Activated CD4-positive, alpha-beta memory T cell treated with anti-CD3 and anti-CD28 coated beads, Interleukin-2, amount 10 ng/mL, durations not matched to agents 7 days and 5 days (primary cell): ENCODE measurements at regions of chr20 and their contacts with region 1.

Region 1: GRCh38 chr20:62182613-62183425 is at the start of gene MTG2:
- DNase-seq: peak; percentile 95
- H3K4me3 Mint-ChIP-seq: peak within 1 kb of the TSS; percentile 92
- H3K27ac Mint-ChIP-seq: peak within 1 kb of the TSS; percentile 88
- H3K4me1 Mint-ChIP-seq: peaks cover 39% of the 10 kb centered on the region
- H3K27me3 Mint-ChIP-seq: no peaks in the 10 kb centered on the region
- total RNA-seq, gene MTG2: 25.6 to 27.2 TPM

Region 2: DNA sequence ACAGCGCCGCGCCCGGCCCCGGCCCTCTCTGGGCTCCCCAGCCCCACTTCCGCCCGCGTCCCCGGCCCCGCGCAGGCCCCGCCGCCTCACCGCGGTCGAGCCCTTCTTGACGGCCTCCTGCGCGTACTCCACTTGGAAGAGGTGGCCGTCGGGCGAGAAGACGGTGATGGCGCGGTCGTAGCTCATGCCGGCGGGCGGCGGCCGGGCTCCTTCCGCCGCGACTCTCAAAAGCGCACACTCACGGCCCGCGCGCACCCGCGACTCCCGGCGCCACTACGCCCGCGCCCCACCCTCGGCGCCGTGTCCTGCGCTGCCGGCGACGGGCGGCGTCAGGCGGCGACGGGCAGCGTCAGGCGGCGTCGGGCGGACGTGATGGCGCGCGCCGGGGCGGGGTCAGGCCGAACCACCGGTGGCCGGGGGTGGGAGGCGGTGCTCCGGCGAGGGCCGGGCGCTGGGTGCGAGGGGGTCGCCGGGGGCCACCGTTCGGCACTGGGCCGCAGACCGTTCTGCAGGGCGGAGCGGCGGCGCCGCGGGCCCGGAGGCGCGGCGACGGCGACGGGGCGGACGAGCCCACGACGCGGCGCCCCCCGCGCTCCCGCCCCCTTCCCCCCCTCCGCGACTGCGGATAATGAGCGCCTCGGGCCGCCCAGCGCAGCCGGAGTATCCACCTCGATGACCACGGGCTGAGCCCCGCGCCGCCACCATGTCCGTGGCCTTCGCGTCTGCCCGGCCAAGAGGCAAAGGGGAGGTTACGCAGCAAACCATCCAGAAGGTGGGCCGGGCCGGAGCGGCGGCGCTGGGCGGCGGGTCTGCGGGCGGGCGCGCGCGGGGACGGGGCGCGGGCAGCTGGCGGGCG is 39.5 kb before region 1 on chr20 and contains the starts of genes PSMA7 and SS18L1:
- CTCF ChIA-PET with region 1: no interaction called
- POLR2A ChIA-PET with region 1: interaction called, 21 read pairs
- DNase-seq: peak; percentile 87
- H3K4me3 Mint-ChIP-seq: peak within 1 kb of the TSS; percentile 89
- H3K27ac Mint-ChIP-seq: peak within 1 kb of the TSS; percentile 90
- H3K4me1 Mint-ChIP-seq: peaks cover 50% of the 10 kb centered on the region
- H3K27me3 Mint-ChIP-seq: no peaks in the 10 kb centered on the region
- total RNA-seq, gene PSMA7: 243 to 246 TPM
- total RNA-seq, gene SS18L1: 15.1 to 16.7 TPM